ENCODE measurements at regions of chr4 and their contacts with region 1.

Region 1: GRCh38 chr4:153643406-153644383 is 40.4 kb upstream of the TLR2 start:
- DNase-seq: no peak
- H3K4me3 Mint-ChIP-seq: no peak overlapping the region
- H3K27ac Mint-ChIP-seq: no peak overlapping the region
- H3K4me1 Mint-ChIP-seq: peaks cover 17% of the 10 kb centered on the region
- H3K27me3 Mint-ChIP-seq: no peaks in the 10 kb centered on the region

Region 2: GRCh38 chr4:152850377-152850776 is 793.3 kb before region 1 on chr4:
- CTCF ChIA-PET with region 1: no interaction called
- intact Hi-C with region 1: loop called (anchors 5 kb)
- DNase-seq: peak; percentile 74
- H3K4me3 Mint-ChIP-seq: no peak overlapping the region
- H3K27ac Mint-ChIP-seq: no peak overlapping the region
- H3K4me1 Mint-ChIP-seq: peaks cover 16% of the 10 kb centered on the region
- H3K27me3 Mint-ChIP-seq: no peaks in the 10 kb centered on the region

Region 3: DNA sequence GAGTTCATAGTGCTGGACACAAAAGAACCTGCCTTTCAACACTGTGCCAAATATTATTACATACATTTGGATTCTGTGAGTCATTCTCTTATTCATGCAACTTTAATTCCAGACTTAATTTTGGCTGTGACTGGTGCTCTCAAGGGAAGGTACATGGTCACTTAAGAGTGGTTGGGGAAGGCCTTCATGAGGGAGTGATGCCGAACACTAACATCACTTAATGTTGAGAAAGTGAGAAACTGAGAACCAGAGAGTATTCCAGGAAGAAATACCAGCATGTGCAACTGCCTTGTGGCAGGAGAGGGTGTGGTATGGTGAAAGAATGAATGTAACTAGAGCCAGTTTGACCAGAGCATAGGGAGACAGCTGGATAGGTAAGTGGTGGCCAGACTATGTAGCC is 749.0 kb before region 1 on chr4:
- CTCF ChIA-PET with region 1: no interaction called
- intact Hi-C with region 1: no loop called
- DNase-seq: no peak
- H3K4me3 Mint-ChIP-seq: no peak overlapping the region
- H3K27ac Mint-ChIP-seq: no peak overlapping the region
- H3K4me1 Mint-ChIP-seq: no peaks in the 10 kb centered on the region
- H3K27me3 Mint-ChIP-seq: no peaks in the 10 kb centered on the region

Region 4: GRCh38 chr4:153318696-153319320 is 324.9 kb before region 1 on chr4:
- CTCF ChIA-PET with region 1: interaction called, 3 read pairs
- intact Hi-C with region 1: loop called (anchors 1 kb)
- DNase-seq: peak; percentile 50
- H3K4me3 Mint-ChIP-seq: no peak overlapping the region
- H3K27ac Mint-ChIP-seq: no peak overlapping the region
- H3K4me1 Mint-ChIP-seq: no peaks in the 10 kb centered on the region
- H3K27me3 Mint-ChIP-seq: no peaks in the 10 kb centered on the region

Region 5: DNA sequence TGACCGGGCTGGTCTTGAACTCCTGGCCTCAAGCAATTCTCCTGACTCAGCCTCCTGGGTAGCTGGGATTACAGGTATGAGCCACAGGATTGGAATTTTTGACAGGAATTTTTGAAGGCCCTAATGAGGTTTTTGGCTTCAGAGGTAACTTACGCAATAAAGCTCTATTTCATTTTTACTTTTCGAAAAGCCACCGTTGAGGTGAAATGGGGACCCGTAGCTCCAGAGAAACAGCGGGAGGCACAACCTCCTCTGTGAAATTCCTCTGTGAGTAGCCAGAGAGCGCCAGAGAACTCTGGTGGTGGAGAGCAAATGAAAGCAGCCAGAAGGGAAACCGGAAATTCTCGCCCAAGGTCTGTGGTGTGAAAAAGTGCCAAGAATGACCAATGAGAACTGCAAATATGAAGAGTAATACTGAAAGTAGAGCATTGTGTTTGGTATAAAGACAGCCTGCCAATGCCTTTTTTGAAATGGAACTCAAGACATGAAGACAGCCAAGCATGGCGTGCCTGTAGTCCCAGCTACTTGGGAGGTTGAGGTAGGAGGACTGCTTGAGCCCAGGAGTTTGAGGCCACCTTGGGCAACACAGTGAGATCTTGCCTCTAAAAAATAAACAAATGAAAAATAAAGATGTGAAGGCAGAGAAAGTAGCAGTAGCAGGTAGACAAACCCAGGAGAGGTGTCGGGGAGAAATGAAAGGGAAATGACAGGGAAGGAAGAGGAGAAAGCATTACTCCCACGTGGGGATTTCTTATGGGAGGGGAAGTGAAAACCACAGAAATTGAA is 210.5 kb before region 1 on chr4:
- CTCF ChIA-PET with region 1: interaction called, 19 read pairs
- intact Hi-C with region 1: loop called (anchors 1 kb)
- DNase-seq: peak; percentile 89
- H3K4me3 Mint-ChIP-seq: peak overlapping the region; percentile 78
- H3K27ac Mint-ChIP-seq: peak overlapping the region; percentile 91
- H3K4me1 Mint-ChIP-seq: peaks cover 76% of the 10 kb centered on the region
- H3K27me3 Mint-ChIP-seq: no peaks in the 10 kb centered on the region

Region 6: DNA sequence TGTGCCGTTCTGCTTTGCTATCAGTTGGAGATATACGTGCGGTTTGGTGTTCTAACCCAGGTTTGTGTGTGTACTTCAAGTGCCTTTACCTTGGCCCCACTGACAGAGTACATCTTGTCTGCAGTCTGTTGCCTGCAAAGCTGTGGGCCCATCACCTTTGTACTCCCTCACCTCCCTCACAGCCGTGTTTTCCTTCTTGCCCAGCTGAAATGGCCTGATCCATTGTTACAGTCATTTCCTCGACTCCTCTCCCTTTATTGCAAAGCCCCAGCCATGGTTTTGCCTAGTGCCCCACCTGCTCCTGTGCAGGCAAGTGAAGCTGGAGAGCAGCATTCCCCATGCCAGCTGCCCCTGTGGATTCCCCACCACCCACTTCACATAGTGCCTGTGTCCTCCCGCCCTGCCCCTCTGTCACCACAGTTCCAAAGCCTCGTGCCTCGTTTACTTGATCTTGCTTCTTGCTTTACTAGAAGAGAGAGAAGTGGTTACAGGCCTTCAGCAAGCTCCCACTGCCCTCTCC is 14.8 kb before region 1 on chr4:
- CTCF ChIA-PET with region 1: interaction called, 24 read pairs
- intact Hi-C with region 1: no loop called
- DNase-seq: no peak
- H3K4me3 Mint-ChIP-seq: no peak overlapping the region
- H3K27ac Mint-ChIP-seq: peak overlapping the region; percentile 47
- H3K4me1 Mint-ChIP-seq: no peaks in the 10 kb centered on the region
- H3K27me3 Mint-ChIP-seq: no peaks in the 10 kb centered on the region

Region 7: GRCh38 chr4:153750197-153750817 is 106.6 kb after region 1 on chr4:
- CTCF ChIA-PET with region 1: interaction called, 47 read pairs
- intact Hi-C with region 1: loop called (anchors 1 kb)
- DNase-seq: peak; percentile 87
- H3K4me3 Mint-ChIP-seq: no peak overlapping the region
- H3K27ac Mint-ChIP-seq: no peak overlapping the region
- H3K4me1 Mint-ChIP-seq: peaks cover 11% of the 10 kb centered on the region
- H3K27me3 Mint-ChIP-seq: no peaks in the 10 kb centered on the region

Region 8: GRCh38 chr4:155473420-155474095 is 1829.9 kb after region 1 on chr4:
- CTCF ChIA-PET with region 1: no interaction called
- intact Hi-C with region 1: no loop called
- DNase-seq: no peak
- H3K4me3 Mint-ChIP-seq: no peak overlapping the region
- H3K27ac Mint-ChIP-seq: no peak overlapping the region
- H3K4me1 Mint-ChIP-seq: no peaks in the 10 kb centered on the region
- H3K27me3 Mint-ChIP-seq: peaks cover 18% of the 10 kb centered on the region